AG04449 (cell line): ENCODE measurements at regions of chr1 and their contacts with region 1.

Region 1: GRCh38 chr1:39196244-39197215 is 8.0 kb upstream of the MACF1 start:
- DNase-seq: no peak
- H3K4me3 ChIP-seq: no peak overlapping the region
- CTCF ChIP-seq: no peak

Region 2: GRCh38 chr1:38814984-38815464 is 381.5 kb before region 1 on chr1:
- CTCF ChIA-PET with region 1: no interaction called
- POLR2A ChIA-PET with region 1: no interaction called
- DNase-seq: no peak
- H3K4me3 ChIP-seq: no peak overlapping the region
- CTCF ChIP-seq: no peak

Region 3: DNA sequence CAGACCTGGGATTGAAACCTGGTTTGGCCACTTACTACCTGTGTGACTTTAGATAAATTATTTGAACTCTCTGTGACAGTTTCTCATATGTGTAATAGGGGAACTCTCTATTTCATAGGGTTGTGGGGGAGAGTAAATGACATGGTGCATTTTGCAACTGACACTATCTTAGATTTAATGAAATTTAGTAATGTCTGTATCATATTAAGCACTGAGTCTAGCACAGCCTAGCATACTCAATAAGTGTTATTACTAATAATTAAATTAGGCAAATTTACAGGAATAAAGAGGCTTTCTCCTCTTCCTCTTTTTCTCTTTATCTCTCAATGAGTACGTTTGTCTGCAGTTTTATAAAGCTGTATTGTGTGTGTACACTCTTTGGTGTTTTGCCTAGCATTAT is 72.2 kb before region 1 on chr1:
- CTCF ChIA-PET with region 1: interaction called, 98 read pairs
- POLR2A ChIA-PET with region 1: no interaction called
- DNase-seq: no peak
- H3K4me3 ChIP-seq: no peak overlapping the region
- CTCF ChIP-seq: no peak

Region 4: DNA sequence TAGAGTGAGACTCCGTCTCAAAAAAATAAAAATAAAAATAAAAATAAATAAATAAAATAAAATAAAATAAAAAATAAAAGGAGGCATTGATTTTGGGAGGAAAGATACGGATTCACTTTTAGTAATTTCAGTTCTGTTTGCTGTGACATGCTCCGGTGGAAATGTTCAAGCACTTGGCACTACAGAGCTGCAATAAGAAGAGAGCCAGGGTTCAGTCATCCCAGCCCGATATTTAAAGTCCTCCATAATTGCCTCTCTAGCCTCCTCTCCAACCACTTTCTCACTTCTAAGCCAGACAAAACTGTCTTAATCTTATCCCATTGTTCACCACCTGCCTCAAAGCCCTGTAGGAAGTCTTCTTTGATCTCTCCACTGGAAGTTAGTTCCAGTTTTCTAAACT is 47.0 kb before region 1 on chr1:
- CTCF ChIA-PET with region 1: interaction called, 13 read pairs
- POLR2A ChIA-PET with region 1: interaction called, 4 read pairs
- DNase-seq: no peak
- H3K4me3 ChIP-seq: no peak overlapping the region
- CTCF ChIP-seq: no peak

Region 5: GRCh38 chr1:39214998-39215873 is 18.7 kb after region 1 on chr1:
- CTCF ChIA-PET with region 1: interaction called, 42 read pairs
- POLR2A ChIA-PET with region 1: no interaction called
- DNase-seq: no peak
- H3K4me3 ChIP-seq: no peak overlapping the region
- CTCF ChIP-seq: no peak

Region 6: DNA sequence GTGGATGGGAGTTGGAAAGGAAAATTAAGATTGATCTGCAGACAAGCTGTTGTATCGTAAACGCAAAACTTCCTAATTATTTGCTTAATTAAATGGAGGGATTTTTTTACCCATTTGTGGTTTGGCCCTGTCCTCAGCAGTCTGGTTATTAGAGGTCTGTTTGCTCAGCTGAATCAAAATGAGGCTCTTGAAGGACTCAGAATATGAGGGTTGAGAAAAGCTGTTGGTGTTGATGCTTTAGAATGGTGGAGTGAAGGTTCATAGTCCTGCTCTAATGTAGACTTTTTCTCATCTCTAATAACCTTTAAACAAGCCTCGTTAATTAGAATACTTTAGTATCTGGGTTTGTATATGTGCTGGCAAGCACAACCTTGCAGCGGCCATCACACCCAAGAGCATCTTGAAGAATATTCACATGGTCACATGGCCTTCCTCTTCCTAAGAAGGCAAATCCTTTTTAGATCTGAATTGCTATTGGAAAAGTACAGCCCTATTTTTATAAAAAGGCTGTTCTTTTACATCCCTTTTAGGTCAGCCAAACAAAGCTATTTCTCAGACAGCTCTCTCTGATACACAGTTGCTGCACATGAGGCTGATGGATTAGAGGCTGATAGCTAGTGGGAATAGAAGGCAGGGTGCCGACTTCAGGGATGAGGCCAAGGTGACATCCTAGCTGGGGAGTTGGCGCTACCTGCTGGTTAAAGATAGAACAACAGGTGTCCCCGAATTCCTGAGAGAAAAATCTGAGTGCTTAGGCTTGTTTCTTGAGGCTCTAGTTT is 61.8 kb after region 1 on chr1:
- CTCF ChIA-PET with region 1: interaction called, 170 read pairs
- POLR2A ChIA-PET with region 1: no interaction called
- DNase-seq: no peak
- H3K4me3 ChIP-seq: no peak overlapping the region
- CTCF ChIP-seq: peak; percentile 66

Region 7: GRCh38 chr1:39391691-39392679 is 195.5 kb after region 1 on chr1:
- CTCF ChIA-PET with region 1: interaction called, 11 read pairs
- POLR2A ChIA-PET with region 1: no interaction called
- DNase-seq: peak; percentile 24
- H3K4me3 ChIP-seq: no peak overlapping the region
- CTCF ChIP-seq: no peak